ENCODE measurements at regions of chr11 and their contacts with region 1.

Region 1: GRCh38 chr11:131064373-131064991 is 148.2 kb upstream of the SNX19 start:
- DNase-seq: peak; percentile 55 to 65
- H3K4me3 ChIP-seq: no peak overlapping the region
- H3K27ac ChIP-seq: no peak overlapping the region
- H3K4me1 ChIP-seq: no peaks in the 10 kb centered on the region
- H3K27me3 ChIP-seq: no peaks in the 10 kb centered on the region
- CTCF ChIP-seq: peak; percentile 61 to 93 (median 76)
- POLR2A ChIP-seq: no peak

Region 2: DNA sequence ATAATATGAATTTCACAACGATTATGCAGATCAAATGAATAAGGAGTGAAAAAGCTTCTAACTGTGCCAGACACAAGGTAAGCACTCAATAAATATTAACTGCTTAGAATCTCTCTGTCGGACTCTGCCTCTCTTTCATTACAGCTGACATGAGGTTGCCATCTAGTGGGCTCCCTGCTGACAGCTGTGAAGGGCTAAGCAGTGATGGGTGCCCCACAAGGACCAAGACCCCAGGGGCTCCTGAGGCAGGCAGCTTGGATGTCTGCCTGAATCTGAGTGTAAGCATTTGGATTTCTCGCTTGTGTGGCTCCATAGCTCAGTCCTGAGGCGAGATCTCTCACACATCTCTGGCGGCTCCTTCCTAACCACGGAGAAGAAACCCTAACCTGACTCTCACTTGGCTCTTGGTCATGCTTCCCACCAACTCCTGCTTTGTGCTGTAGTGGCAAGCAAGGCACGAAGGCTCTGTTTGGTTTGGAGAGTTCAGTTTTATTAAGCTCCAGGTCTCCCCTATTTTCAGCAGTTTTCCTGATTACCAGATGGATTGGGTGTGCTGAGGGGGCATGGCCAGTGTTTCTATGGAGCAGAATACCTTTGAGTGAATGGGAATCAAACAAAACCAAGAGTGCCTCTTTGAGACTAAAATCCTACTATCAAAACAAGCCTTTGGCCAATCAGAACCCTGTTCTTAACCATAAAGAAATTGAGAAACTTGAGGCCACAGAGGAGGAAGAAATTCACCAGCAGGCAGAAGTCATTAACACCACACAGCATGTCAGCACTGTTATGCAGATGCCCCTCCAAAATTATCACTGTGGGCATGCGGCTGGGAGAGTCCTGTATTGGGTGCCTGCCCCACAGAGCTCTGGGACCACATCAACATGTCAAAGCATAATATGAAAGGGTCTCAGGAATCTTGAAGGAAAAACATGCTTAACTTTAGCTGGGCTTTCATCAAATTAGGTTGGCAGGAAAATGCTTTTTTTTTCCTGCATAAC is 153.1 kb after region 1 on chr11:
- intact Hi-C with region 1: loop called (anchors 10 kb)
- DNase-seq: peak; percentile 19 to 27
- H3K4me3 ChIP-seq: no peak overlapping the region
- H3K27ac ChIP-seq: no peak overlapping the region
- H3K4me1 ChIP-seq: no peaks in the 10 kb centered on the region
- H3K27me3 ChIP-seq: no peaks in the 10 kb centered on the region
- CTCF ChIP-seq: peak in 4 of 6 experiments; percentile 23 to 61 (median 49)
- POLR2A ChIP-seq: no peak

Region 3: DNA sequence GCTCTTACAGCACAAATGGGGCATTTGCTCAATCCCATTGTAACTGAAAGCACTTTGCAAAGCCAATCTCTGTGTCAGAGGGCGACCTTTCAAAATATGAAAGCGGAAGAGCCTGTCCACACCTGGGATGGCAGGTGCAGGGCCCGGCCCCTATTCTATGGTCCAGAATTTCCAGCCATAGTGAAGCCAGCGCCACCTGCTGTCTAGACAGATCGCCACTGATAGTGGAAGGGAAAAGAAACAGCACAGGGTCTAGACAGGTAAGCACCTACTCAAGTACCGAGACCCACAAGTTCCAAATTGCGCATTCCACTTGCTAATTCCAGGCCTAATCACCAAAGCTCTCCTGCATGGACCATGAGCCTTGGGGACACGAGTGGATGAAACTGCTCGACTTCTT is 447.3 kb after region 1 on chr11:
- intact Hi-C with region 1: loop called (anchors 10 kb)
- DNase-seq: peak; percentile 52 to 70
- H3K4me3 ChIP-seq: no peak overlapping the region
- H3K27ac ChIP-seq: no peak overlapping the region
- H3K4me1 ChIP-seq: no peaks in the 10 kb centered on the region
- H3K27me3 ChIP-seq: no peaks in the 10 kb centered on the region
- CTCF ChIP-seq: peak in 5 of 6 experiments; percentile 10 to 66 (median 63)
- POLR2A ChIP-seq: no peak

Region 4: DNA sequence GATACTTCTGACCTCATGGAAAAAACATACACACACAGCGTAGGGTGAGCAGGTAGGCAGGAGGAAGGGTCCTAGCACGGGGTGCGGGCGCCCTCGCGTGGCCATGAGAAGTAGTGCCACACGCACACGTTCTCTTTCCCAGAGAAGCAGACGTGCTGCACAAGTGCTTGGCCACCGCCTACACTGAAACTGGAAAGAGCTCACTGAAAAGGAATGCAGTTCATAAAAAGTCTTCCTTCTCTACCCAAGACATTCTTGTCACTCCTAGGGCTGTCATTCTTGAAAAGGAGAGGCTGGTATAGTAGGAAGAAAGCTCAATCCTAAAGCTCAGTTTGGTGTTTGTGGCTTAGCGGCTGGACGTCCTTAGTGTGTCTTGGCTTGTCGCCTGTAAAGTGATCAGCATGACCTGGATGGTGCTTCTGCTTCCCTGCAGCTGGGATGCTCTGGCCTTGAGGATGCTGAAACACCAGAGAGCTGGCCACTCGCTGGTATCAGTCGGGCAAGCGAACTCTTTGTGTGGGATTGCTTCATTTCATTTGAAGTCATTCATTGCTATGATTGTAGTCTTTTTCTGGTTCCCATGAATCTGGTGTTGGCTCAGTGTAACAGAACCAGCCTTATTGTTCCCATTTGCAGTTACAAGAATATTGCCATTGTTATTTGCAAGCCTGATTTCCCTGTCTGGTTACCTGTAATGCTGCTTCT is 609.7 kb after region 1 on chr11:
- intact Hi-C with region 1: loop called (anchors 10 kb)
- DNase-seq: peak; percentile 79 to 86
- H3K4me3 ChIP-seq: no peak overlapping the region
- H3K27ac ChIP-seq: no peak overlapping the region
- H3K4me1 ChIP-seq: peaks cover 0 to 8% of the 10 kb centered on the region in 2 donors
- H3K27me3 ChIP-seq: no peaks in the 10 kb centered on the region
- CTCF ChIP-seq: peak; percentile 81 to 96 (median 90)
- POLR2A ChIP-seq: no peak

Measured in thyroid gland (tissue), 4 donors.